ENCODE measurements at regions of chr11 and their contacts with region 1.

Region 1: DNA sequence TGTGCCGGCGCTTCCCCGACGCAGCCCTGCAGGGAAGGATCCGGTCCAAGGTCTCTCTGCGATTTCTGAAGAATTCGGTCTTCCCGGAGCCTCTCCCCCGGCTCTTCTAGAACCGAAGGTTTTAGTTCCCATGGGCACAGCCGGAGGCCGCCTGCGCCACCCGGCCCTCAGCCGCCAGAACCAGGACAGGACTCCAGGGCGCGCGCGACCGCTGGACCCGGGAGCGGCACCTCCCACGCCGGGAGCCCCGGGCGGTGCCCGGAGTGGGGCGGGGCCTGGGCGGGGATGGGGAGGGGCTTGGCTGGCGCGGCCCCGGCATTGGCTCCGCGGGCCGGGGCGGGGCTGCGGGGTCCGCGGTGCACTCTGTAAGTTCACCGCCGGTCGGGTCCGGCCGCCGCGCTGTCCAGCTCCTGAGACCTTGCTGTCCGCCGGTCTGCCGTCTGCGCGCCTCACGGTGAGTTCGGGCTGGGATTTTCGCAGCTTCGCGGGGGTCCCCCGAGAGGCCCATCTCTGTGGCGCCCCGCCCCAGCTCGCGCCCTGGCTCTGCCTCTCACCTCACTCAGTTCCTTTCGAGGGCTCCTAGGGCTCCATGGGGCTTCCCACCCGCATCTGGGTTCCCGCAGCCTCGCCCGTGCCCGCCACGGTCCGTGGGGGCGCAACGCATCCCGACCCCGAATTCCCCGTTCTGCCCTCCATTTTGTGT is at the start of gene CDC42EP2:
- DNase-seq: no peak
- H3K4me3 ChIP-seq: peak within 1 kb of the TSS; percentile 90
- H3K27ac ChIP-seq: peak within 1 kb of the TSS; percentile 93
- H3K27me3 ChIP-seq: no peaks in the 10 kb centered on the region
- CTCF ChIP-seq: no peak
- polyA plus RNA-seq, gene CDC42EP2: 14.3 and 21.1 TPM in 2 replicates

Region 2: DNA sequence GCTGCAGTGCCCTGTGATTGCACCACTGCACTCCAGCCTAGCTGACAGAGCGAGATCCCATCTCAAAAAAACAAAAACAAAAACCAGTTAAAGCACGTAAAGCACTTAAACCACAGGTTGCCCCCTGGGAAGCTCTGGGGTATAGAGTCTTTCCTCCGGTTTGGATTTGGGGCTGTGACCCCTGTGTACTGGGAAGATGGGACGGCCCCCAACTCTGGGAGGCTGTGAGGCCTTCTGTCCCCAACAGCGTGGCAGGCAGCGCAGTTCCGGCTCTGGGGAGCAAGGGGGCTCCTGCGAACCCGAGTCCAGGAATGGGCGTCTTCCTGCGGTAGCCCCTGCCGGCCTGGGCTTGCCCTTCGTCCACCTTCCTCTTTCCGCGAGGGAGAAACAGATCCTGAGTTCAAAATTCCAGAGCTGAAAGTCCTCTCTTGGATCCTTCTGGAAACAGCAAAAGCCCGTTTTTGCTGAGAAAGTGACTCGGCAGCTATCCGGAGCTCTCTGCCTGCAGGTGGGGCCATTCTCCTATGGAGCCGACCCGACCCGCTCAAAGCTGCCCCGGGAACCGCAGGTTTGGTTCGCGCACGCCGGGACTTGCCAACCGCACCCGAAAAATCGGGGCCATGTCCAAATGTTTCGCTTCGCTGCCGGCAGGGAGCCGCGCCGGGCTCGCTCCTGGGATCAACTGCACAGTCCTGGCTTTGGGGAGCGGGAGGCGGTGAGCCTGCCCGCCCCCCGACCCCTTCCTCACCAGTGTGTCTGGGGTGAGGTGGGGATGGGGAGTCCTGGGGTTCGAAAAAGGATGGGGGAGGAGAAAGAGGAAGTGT is 89.2 kb before region 1 on chr11:
- CTCF ChIA-PET with region 1: interaction called, 10 read pairs
- POLR2A ChIA-PET with region 1: no interaction called
- DNase-seq: peak; percentile 6
- H3K4me3 ChIP-seq: peak overlapping the region; percentile 53
- H3K27ac ChIP-seq: peak overlapping the region; percentile 75
- H3K27me3 ChIP-seq: no peaks in the 10 kb centered on the region
- CTCF ChIP-seq: peak; percentile 65

Region 3: GRCh38 chr11:65261591-65262380 is 52.9 kb before region 1 on chr11 and contains the start of gene POLA2:
- CTCF ChIA-PET with region 1: interaction called, 7 read pairs
- POLR2A ChIA-PET with region 1: interaction called, 13 read pairs
- DNase-seq: peak; percentile 86
- H3K4me3 ChIP-seq: peak within 1 kb of the TSS; percentile 83
- H3K27ac ChIP-seq: peak within 1 kb of the TSS; percentile 84
- H3K27me3 ChIP-seq: no peaks in the 10 kb centered on the region
- CTCF ChIP-seq: no peak
- polyA plus RNA-seq, gene POLA2: 10.4 and 14.1 TPM in 2 replicates

Region 4: DNA sequence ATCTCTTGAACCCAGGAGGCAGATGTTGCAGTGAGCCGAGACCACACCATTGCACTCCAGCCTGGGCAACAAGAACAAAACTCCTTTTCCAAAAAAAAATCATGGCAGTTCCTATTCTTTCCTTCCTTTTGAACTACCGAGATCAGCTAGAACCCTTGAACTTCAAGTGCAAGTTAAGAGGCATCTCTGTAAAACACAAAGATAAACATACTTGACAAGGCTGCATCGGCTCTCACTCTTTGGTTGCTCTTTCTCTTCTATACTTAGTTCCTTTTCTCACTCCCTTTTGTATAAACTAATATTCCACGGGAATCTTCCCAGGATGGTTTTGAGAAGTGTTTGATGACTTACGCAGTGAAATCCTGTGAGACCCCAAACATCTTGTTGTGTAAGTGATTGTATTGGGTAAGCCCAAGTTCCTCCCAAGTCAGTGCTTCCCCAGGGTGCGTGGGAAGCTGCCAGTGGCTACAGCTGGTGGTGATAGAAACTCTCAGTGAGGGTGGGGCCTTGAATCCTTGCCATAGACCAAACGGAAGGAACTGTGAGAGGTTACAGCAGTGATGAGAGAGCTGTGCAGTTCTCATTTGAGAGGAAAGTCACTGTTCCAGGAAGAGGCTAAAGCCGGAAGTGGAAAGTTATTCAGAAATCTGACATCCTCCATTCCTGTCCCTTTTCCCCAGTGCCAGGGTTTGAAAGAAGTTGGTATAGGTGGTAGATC is 24.0 kb before region 1 on chr11:
- CTCF ChIA-PET with region 1: interaction called, 93 read pairs
- POLR2A ChIA-PET with region 1: interaction called, 118 read pairs
- DNase-seq: peak; percentile 99
- H3K4me3 ChIP-seq: peak overlapping the region; percentile 29
- H3K27ac ChIP-seq: peak overlapping the region; percentile 100
- H3K27me3 ChIP-seq: no peaks in the 10 kb centered on the region
- CTCF ChIP-seq: no peak

Region 5: GRCh38 chr11:65301491-65302329 is 12.9 kb before region 1 on chr11:
- CTCF ChIA-PET with region 1: interaction called, 93 read pairs
- POLR2A ChIA-PET with region 1: interaction called, 20 read pairs
- DNase-seq: no peak
- H3K4me3 ChIP-seq: no peak overlapping the region
- H3K27ac ChIP-seq: peak overlapping the region; percentile 68
- H3K27me3 ChIP-seq: no peaks in the 10 kb centered on the region
- CTCF ChIP-seq: no peak

Region 6: DNA sequence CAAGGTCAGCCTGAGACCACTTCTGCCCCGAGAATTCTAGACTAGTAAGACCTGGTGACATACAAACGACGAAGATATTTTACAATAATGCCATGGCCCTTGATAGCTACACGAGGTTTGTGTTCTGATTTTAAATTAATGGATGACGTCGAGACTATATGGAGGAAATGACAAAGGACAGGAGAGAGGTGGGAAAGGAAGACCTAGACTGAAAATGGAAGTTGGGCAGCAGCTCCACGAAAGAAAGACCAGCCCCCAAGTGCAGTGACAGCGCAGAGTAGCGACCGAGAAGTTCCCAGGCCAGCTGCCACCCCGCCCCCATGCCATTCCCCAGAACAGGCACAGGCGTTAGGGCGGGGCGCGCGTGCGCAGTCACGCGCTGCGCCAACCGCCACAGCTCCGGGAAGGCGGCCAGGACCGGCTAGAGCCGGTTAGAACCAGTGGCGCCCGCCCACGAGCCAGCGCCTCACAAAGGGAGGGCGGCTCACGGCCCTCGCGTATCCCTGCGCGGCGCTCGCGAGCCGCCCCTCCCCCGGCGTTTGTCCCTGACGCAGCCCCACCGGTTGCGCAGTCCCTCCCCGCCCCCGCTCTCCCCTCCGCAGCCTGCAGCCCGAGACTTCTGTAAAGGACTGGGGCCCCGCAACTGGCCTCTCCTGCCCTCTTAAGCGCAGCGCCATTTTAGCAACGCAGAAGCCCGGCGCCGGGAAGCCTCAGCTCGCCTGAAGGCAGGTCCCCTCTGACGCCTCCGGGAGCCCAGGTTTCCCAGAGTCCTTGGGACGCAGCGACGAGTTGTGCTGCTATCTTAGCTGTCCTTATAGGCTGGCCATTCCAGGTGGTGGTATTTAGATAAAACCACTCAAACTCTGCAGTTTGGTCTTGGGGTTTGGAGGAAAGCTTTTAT is 182.7 kb after region 1 on chr11:
- CTCF ChIA-PET with region 1: no interaction called
- POLR2A ChIA-PET with region 1: no interaction called
- DNase-seq: peak; percentile 98
- H3K4me3 ChIP-seq: peak overlapping the region; percentile 97
- H3K27ac ChIP-seq: peak overlapping the region; percentile 98
- H3K27me3 ChIP-seq: no peaks in the 10 kb centered on the region
- CTCF ChIP-seq: no peak